WTC11 (cell line): ENCODE measurements at regions of chr3 and their contacts with region 1.

Region 1: DNA sequence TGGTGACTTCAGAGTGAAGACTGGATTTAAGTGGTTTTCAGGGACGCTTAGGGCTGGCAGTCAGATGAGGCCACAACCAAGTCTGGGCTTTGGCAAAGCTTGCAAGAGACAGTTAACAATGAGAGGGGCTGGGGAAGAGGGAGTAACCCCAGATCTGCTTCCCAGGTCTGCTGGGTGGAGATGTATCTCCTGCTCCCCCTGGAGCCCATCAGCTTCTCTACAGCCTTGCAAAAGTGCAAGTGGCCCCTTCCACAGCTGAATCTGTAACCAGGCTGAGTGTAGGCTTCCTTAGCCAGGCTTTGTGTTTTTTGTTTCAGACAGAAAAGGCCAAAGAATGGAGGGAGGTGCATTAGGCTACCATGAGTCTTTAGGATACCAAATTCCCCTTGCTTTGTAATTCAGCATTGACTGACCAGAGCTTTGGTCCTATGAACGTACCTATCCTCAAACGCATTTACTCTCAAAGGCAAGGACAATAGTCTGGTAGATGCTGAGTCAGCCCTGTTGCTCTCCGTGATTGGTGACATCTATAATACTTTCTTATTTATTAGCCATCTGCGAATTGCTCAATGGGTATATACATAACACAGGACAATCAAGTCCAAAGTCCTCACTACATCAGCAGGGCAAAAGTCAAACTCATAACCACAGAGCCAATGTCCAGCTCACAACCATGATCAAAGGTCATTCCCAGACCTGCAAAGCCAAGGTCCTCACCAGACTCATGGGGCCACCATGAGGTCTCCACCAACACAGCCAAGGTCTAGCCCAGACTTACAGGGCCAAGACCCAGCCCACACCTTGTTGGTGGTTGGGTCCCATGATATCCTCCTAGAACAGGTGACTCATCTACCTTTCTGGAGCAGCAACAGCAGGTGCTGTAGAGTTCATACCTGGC is 17.1 kb downstream of the CCDC13 start:
- DNase-seq: peak; percentile 59
- ATAC-seq: peak; percentile 99
- H3K4me3 Mint-ChIP-seq: no peak overlapping the region
- H3K27ac Mint-ChIP-seq: no peak overlapping the region
- H3K4me1 Mint-ChIP-seq: no peaks in the 10 kb centered on the region
- H3K27me3 Mint-ChIP-seq: no peaks in the 10 kb centered on the region; the same call in 1 of the 2 replicates
- CTCF ChIP-seq: peak; percentile 14; the same call in 1 of the 2 replicates

Region 2: GRCh38 chr3:42476225-42477125 is 279.5 kb before region 1 on chr3:
- CTCF ChIA-PET with region 1: no interaction called
- POLR2A ChIA-PET with region 1: no interaction called
- DNase-seq: no peak
- ATAC-seq: peak; percentile 41; the same call in 1 of the 2 replicates
- H3K4me3 Mint-ChIP-seq: no peak overlapping the region
- H3K27ac Mint-ChIP-seq: no peak overlapping the region
- H3K4me1 Mint-ChIP-seq: peaks cover 3% of the 10 kb centered on the region
- H3K27me3 Mint-ChIP-seq: peaks cover 33% of the 10 kb centered on the region
- CTCF ChIP-seq: no peak

Region 3: DNA sequence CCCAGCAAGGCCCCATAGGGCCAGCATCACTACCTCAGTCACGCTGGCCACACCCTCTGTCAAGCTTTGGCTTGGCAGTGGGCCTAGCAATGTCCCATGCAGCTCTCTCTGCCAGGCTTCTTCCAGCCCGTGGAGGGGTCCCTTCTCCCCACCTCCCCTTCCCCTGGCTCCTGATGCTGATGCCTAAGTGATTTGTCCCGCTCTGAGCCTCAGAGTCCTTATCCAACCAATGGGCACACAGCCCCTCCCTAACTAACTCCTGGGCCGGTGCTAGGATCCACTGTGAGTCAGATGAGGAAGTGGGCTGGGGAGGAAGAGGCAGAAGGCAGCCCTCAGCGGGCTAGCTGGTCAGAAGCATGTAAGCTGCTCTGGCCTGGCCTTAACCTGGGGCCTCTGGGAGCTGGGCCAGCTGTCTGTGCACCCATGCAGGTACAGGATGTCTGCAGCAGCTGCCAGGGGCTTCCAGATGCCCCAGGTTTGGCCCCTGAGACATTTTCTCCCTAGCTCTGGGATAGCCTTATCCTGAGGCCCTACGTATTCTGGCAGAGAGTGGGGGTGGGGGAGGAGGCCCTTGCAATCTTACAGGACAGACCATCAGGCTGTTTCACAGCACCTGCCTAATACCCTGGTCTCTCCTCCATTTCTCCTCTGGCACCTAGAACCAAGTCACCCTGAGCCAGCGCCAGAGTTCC is 103.2 kb before region 1 on chr3:
- CTCF ChIA-PET with region 1: interaction called, 14 read pairs
- POLR2A ChIA-PET with region 1: no interaction called
- DNase-seq: no peak
- ATAC-seq: peak; percentile 2
- H3K4me3 Mint-ChIP-seq: peak overlapping the region; percentile 87
- H3K27ac Mint-ChIP-seq: 0 out of 2 replicates have a peak overlapping the region, but pooled peaks have one; percentile 12
- H3K4me1 Mint-ChIP-seq: peaks cover 47% of the 10 kb centered on the region
- H3K27me3 Mint-ChIP-seq: no peaks in the 10 kb centered on the region
- CTCF ChIP-seq: no peak

Region 4: DNA sequence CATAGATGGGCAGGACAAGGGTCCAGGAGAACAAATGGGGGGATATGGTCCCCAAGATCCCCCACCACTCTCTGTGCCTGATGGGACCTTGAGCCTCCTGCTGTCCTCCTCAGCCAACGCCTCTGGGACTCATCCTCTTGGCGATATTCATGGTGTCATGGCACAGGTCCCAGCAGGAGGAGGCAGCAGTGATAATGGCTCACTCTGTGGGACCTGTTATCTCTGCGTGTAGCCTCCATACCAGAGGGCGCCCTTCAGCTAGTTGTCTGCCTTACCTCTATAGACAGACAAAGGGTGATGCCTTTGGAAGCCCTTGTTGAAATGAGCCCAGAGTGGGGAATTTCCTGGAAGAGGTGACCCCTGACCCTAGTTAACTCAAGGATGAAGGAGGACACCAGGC is 95.0 kb before region 1 on chr3:
- CTCF ChIA-PET with region 1: interaction called, 10 read pairs
- POLR2A ChIA-PET with region 1: no interaction called
- DNase-seq: no peak
- ATAC-seq: peak; percentile 57
- H3K4me3 Mint-ChIP-seq: no peak overlapping the region
- H3K27ac Mint-ChIP-seq: no peak overlapping the region
- H3K4me1 Mint-ChIP-seq: peaks cover 10% of the 10 kb centered on the region; the same call in 1 of the 2 replicates
- H3K27me3 Mint-ChIP-seq: no peaks in the 10 kb centered on the region
- CTCF ChIP-seq: no peak

Region 5: GRCh38 chr3:42804106-42804830 is 48.3 kb after region 1 on chr3 and contains the start of gene HIGD1A:
- CTCF ChIA-PET with region 1: no interaction called
- POLR2A ChIA-PET with region 1: no interaction called
- DNase-seq: peak; percentile 94
- ATAC-seq: peak; percentile 97
- H3K4me3 Mint-ChIP-seq: peak within 1 kb of the TSS; percentile 95
- H3K27ac Mint-ChIP-seq: peak within 1 kb of the TSS; percentile 83
- H3K4me1 Mint-ChIP-seq: peaks cover 37% of the 10 kb centered on the region
- H3K27me3 Mint-ChIP-seq: peaks cover 22% of the 10 kb centered on the region
- CTCF ChIP-seq: no peak
- total RNA-seq, gene HIGD1A: 74.6 to 80.7 TPM (median 76.2 TPM) in 3 replicates

Region 6: DNA sequence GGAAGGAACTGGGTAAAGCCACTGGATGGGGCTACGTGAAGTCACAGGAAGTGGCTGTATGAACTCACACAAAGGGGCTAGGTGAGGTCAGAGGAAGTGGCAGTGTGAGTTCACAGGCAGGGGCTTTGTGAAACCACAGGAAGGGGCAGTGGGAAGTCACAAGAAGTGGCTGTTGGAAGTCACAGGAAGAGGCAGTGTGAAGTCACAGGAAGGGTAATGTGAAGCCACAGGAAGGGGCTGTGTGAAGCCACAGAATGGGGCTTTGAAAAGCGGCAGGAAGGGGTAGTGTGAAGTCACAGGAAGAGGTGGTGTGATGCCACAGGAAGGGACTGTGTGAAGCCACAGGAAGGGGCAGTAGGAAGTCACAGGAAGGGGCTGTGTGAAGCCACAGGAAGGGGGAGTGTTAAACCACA is 257.8 kb after region 1 on chr3:
- CTCF ChIA-PET with region 1: no interaction called
- POLR2A ChIA-PET with region 1: no interaction called
- DNase-seq: no peak
- ATAC-seq: no peak
- H3K4me3 Mint-ChIP-seq: no peak overlapping the region
- H3K27ac Mint-ChIP-seq: no peak overlapping the region
- H3K4me1 Mint-ChIP-seq: no peaks in the 10 kb centered on the region
- H3K27me3 Mint-ChIP-seq: no peaks in the 10 kb centered on the region
- CTCF ChIP-seq: no peak